A673 (cell line): ENCODE measurements at regions of chr1 and their contacts with region 1.

Region 1: GRCh38 chr1:152497273-152497672 is 13.3 kb upstream of the LCE5A start:
- DNase-seq: peak; percentile 37
- H3K4me3 ChIP-seq: no peak overlapping the region
- H3K27ac ChIP-seq: no peak overlapping the region
- H3K4me1 ChIP-seq: no peaks in the 10 kb centered on the region
- H3K27me3 ChIP-seq: no peaks in the 10 kb centered on the region
- CTCF ChIP-seq: peak; percentile 49

Region 2: DNA sequence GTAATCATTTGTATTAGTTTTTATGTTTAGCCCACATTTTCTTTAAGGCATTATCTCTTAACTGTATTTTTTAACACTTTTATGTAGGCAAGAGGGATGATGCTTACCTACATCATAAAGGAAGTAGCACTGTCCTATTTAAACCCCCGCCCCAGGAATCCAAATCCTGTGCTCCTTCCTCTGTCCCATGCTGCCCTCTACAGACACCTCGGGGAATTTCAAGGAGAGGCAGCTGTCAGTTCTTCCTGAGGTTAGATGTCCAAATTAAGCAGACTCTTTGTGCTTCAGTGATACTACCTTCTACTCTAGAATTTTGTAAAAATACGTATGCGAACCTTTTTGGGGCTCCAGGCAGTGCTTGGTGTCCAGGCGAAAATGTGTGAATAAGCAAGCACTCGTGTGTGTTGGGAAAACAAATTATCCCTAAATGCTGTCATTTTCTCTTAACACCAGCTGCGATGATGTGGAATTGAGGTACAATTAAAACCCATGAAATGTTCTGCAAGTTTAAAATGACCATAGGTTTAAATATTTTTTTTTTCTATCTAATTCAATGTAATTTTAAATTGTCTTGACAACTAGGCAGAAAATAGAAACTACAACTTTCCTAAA is 36.2 kb after region 1 on chr1:
- CTCF ChIA-PET with region 1: no interaction called
- POLR2A ChIA-PET with region 1: no interaction called
- intact Hi-C with region 1: loop called (anchors 2 kb)
- DNase-seq: peak; percentile 71
- H3K4me3 ChIP-seq: no peak overlapping the region
- H3K27ac ChIP-seq: no peak overlapping the region
- H3K4me1 ChIP-seq: no peaks in the 10 kb centered on the region
- H3K27me3 ChIP-seq: peaks cover 2% of the 10 kb centered on the region
- CTCF ChIP-seq: peak; percentile 81